ENCODE measurements at regions of chr9 and their contacts with region 1.

Region 1: GRCh38 chr9:93962561-93963440 is 7.6 kb upstream of the BARX1 start:
- DNase-seq: peak; percentile 66 to 85
- ATAC-seq: peak; percentile 71 to 90 (median 82)
- H3K4me3 ChIP-seq: no peak overlapping the region
- H3K27ac ChIP-seq: no peak overlapping the region
- H3K4me1 ChIP-seq: peaks cover 16 to 36% (median 31%) of the 10 kb centered on the region in 9 donors
- H3K27me3 ChIP-seq: peaks cover 33 to 78% (median 71%) of the 10 kb centered on the region in 7 donors
- CTCF ChIP-seq: peak; percentile 82 to 90 (median 87)

Region 2: GRCh38 chr9:93827545-93828330 is 135.1 kb before region 1 on chr9:
- intact Hi-C with region 1: loop called in 6 of 10 experiments (anchors 2 to 10 kb)
- DNase-seq: peak in 1 of 2 donors; percentile 42
- ATAC-seq: peak; percentile 79 to 96 (median 92)
- H3K4me3 ChIP-seq: peak overlapping the region; percentile 19 to 53 (median 42)
- H3K27ac ChIP-seq: no peak overlapping the region
- H3K4me1 ChIP-seq: peaks cover 0 to 10% (median 5%) of the 10 kb centered on the region in 9 donors
- H3K27me3 ChIP-seq: peaks cover 0 to 63% (median 49%) of the 10 kb centered on the region in 7 donors
- CTCF ChIP-seq: peak; percentile 67 to 90 (median 85)

Region 3: GRCh38 chr9:93860694-93861658 is 101.8 kb before region 1 on chr9:
- intact Hi-C with region 1: no loop called
- DNase-seq: no peak
- ATAC-seq: peak in 2 of 8 donors; percentile 37 to 39
- H3K4me3 ChIP-seq: peak overlapping the region in 2 of 10 donors; percentile 12 to 19
- H3K27ac ChIP-seq: no peak overlapping the region
- H3K4me1 ChIP-seq: peaks cover 0 to 6% (median 0%) of the 10 kb centered on the region in 9 donors
- H3K27me3 ChIP-seq: peaks cover 0 to 76% (median 60%) of the 10 kb centered on the region in 7 donors
- CTCF ChIP-seq: no peak

Region 4: GRCh38 chr9:93886911-93887310 is 75.9 kb before region 1 on chr9:
- intact Hi-C with region 1: no loop called
- DNase-seq: no peak
- ATAC-seq: no peak
- H3K4me3 ChIP-seq: no peak overlapping the region
- H3K27ac ChIP-seq: no peak overlapping the region
- H3K4me1 ChIP-seq: no peaks in the 10 kb centered on the region
- H3K27me3 ChIP-seq: peaks cover 0 to 20% (median 0%) of the 10 kb centered on the region in 7 donors
- CTCF ChIP-seq: no peak